ENCODE measurements at regions of chr12 and their contacts with region 1.

Region 1: GRCh38 chr12:106841510-106842302 is 67.2 kb downstream of the RIC8B start:
- DNase-seq: peak; percentile 17
- ATAC-seq: peak; percentile 82

Region 2: GRCh38 chr12:106386813-106387535 is 454.7 kb before region 1 on chr12:
- intact Hi-C with region 1: loop called (anchors 5 kb)
- DNase-seq: no peak
- ATAC-seq: no peak

Region 3: GRCh38 chr12:106682592-106683234 is 159.0 kb before region 1 on chr12:
- intact Hi-C with region 1: loop called (anchors 10 kb)
- DNase-seq: no peak
- ATAC-seq: peak; percentile 37

Region 4: DNA sequence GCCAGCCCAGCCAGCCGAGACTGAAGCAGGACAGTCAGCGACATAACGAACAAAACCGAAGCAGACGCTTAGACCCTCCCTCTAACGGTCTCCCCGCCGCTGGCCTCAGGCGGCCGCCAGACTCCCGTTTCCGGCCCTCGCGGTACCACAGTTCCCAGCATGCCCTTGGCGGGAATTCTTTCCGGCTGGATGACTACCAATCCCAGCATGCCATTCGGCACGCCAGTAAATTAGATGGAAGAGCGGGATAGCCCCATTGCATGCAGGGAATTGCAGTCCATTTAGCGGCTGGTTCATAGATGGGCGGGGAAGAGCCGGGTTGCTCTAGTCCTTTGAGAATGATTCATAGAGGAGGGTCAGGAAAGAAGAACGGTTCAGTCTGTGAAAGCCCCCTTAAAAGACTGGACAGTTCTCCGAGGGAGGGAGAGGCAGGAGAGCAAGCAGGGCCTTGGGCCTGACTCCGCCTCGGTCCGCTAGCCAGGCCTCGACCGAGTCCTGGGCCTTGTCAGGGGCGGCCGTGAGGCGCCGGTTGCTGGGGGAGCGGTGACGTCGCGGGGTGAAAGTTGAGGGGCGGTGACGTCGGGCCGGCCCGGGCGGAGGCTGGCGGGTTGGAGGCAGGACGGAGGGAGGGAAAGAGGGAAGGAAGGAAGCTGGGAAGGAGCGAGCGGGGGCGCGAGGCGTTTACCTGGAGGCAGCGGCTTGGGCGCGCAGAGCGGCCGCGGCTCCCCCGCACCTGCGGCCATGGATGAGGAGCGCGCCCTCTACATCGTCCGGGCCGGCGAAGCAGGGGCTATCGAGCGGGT is 67.5 kb before region 1 on chr12 and contains the start of gene RIC8B:
- intact Hi-C with region 1: loop called (anchors 2 kb)
- DNase-seq: peak; percentile 94
- ATAC-seq: peak; percentile 97
- total RNA-seq, gene RIC8B: 26.5 TPM